ENCODE measurements at regions of chr2 and their contacts with region 1.

Region 1: DNA sequence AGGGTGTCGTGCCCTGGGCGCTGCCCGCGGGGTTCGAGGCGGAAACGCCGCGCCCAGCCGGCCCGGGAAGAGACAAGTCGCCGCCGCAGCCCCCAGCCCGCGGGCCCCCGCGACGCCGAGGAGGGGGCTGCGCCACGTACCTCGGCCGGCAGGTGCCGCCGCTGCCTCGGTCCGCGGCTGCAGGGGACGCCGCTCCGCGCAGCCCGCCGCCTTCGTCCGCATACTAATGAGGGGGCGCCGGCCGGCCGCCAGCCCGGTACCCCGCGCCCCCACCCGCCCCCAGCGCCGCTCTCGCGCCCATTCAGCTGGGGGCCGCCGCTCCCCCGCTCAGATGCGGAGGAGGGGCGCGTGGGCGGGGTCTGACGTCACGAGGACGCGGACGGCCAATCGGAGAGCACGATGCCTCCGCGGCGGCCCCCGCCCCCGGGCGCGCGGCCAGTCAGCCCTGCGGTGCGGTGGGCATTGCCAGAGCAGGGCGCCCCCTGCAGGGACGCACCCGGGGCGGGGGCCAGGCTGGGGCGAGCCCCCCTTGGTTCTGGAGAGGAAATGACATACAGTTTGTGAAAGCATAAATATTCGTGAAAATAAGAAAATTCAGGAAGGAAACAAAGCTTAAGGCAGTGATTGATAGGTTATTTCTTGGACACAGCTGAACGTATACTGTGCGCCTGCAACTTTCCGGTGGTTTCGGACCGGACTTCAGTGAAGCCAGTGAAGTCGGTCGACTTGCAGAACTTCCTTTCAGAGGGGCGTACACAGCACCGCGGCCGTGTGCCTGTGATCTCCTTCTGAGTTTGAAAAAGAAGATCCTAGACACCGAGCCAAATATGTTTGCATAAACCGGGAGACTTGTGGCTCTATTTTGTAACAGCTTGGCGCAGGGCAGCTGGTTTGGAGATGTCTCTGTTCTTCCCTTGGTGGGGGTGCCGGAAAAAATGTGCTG is at the start of gene ST3GAL5:
- DNase-seq: peak; percentile 87 to 95 (median 93)
- H3K4me3 ChIP-seq: peak within 1 kb of the TSS; percentile 61 to 99 (median 88)
- H3K27ac ChIP-seq: peak within 1 kb of the TSS; percentile 83 to 100 (median 99)
- H3K27me3 ChIP-seq: no peaks in the 10 kb centered on the region
- CTCF ChIP-seq: peak; percentile 30 to 97 (median 78)
- total RNA-seq, gene ST3GAL5: 56.0 to 109 (median 86.7) TPM

Region 2: GRCh38 chr2:85741833-85742455 is 147.0 kb before region 1 on chr2:
- intact Hi-C with region 1: loop called in 1 of 2 experiments (anchors 10 kb)
- DNase-seq: peak in 9 of 10 donors; percentile 47 to 85 (median 75)
- H3K4me3 ChIP-seq: peak overlapping the region in 44 of 59 donors; percentile 2 to 56 (median 26)
- H3K27ac ChIP-seq: peak overlapping the region; percentile 78 to 100 (median 98)
- H3K27me3 ChIP-seq: no peaks in the 10 kb centered on the region
- CTCF ChIP-seq: peak in 10 of 56 donors; percentile 9 to 27 (median 16)

Region 3: DNA sequence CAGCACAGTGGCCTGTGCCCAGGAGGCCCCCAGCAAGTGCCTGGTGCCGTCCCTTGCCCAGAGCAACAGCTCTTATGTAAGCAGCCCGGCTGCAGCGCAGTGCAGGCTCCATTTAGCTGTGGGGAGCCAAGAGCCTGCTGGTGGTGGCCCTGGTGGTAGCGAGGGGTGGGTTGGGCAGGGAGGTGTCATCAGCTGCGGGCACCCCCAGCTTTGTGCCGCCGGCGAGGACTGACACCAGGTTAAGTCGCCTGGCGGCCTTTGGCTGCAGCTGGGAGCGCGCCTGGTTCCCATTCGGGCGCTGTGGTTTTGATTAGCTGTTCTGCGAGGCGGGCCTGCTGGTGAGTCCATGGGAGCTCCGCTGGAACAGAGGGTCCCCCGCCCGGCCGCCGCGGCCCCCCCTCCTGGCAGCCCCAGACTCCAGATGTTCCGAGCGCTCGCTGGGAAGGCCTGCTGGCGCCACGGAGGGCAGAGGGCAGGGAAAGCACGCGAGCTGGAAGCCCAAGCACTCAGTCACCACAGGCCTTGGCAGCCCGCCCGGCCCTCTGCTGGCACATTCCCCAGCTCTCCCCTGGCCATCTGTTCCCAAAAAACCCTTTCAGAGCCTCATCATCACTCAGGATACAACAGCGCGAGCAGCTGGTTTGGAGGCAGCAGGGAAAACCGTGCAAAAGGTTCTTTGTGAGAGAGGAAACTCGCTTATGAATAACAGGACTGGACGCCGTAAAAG is 116.8 kb before region 1 on chr2:
- intact Hi-C with region 1: loop called in 1 of 2 experiments (anchors 5 kb)
- DNase-seq: peak; percentile 95 to 99 (median 97)
- H3K4me3 ChIP-seq: peak overlapping the region in 56 of 59 donors; percentile 3 to 59 (median 36)
- H3K27ac ChIP-seq: peak overlapping the region; percentile 46 to 97 (median 91)
- H3K27me3 ChIP-seq: no peaks in the 10 kb centered on the region
- CTCF ChIP-seq: peak in 40 of 56 donors; percentile 4 to 57 (median 38)

Region 4: GRCh38 chr2:85851253-85852151 is 37.5 kb before region 1 on chr2:
- intact Hi-C with region 1: loop called (anchors 1 to 2 kb)
- DNase-seq: peak in 9 of 10 donors; percentile 39 to 72 (median 62)
- H3K4me3 ChIP-seq: peak overlapping the region in 2 of 59 donors; percentile 9 to 21
- H3K27ac ChIP-seq: peak overlapping the region in 58 of 59 donors; percentile 0 to 90 (median 71)
- H3K27me3 ChIP-seq: no peaks in the 10 kb centered on the region
- CTCF ChIP-seq: no peak

Region 5: GRCh38 chr2:85911814-85912692 is 23.1 kb after region 1 on chr2:
- intact Hi-C with region 1: no loop called
- DNase-seq: no peak
- H3K4me3 ChIP-seq: no peak overlapping the region
- H3K27ac ChIP-seq: peak overlapping the region; percentile 14 to 100 (median 77)
- H3K27me3 ChIP-seq: no peaks in the 10 kb centered on the region
- CTCF ChIP-seq: no peak

Region 6: DNA sequence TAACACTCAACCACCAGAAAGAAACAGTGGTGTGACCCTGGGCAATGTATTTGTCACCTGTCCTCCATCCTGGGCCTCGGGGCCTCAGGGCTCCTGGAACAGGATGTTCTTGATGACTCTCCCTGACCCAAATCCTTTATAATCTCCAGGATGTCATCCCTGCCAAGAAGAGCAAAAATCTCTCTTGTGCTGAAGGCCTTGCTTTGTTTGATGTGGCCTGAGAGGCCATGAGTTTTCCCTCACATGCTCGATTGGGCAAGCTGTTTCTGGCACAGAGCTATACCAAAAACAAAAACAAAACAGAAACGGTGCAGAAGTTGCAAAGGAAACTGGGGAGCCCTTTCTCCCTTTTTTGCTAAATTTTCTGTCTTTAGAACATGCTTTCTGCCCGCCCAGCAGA is 35.6 kb after region 1 on chr2:
- intact Hi-C with region 1: loop called (anchors 1 to 2 kb)
- DNase-seq: peak in 2 of 10 donors; percentile 34 to 42
- H3K4me3 ChIP-seq: peak overlapping the region in 1 of 59 donors; percentile 14
- H3K27ac ChIP-seq: peak overlapping the region; percentile 71 to 99 (median 95)
- H3K27me3 ChIP-seq: no peaks in the 10 kb centered on the region
- CTCF ChIP-seq: peak in 2 of 56 donors; percentile 17 to 18

Region 7: DNA sequence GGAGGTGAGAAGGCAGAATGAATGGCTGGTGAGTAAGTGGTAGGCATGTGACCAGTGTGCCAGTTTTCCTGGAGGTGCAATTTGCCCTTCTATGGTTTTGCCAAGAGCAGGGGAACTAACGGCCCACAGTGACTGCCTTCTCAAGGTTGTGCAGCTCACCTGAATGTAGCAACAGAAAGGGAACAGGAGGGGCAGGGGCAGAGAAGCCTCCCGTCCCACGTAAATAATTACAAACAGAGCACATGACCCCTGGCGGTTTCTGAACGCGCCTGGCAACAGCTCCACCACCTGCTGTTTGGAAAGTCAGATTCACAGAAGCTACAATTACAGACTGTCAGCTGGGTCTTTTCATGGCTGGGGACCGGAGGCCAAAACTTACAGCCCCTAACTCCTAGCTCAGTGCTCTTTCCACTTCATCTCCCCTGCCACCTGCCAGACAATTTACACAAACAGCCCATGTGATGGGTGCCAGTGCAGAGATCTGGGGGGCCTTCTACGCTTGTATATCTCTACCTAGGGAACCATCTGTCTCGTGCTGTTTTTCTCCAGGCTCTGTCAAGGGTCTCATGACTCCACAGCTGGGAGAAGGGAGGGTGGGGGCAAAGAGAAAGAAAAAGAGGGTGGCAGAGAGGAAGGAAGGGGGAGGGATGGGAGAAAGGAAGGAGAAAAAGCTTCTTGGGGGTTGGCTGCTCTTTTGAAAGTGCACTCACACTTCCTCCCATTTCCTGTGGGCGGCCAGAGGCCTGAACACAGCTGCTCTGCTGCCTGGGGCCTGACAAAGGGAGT is 147.1 kb after region 1 on chr2:
- intact Hi-C with region 1: loop called (anchors 1 to 2 kb)
- DNase-seq: peak in 9 of 10 donors; percentile 51 to 80 (median 65)
- H3K4me3 ChIP-seq: peak overlapping the region in 9 of 59 donors; percentile 6 to 32 (median 13)
- H3K27ac ChIP-seq: peak overlapping the region; percentile 76 to 99 (median 95)
- H3K27me3 ChIP-seq: no peaks in the 10 kb centered on the region
- CTCF ChIP-seq: peak in 39 of 56 donors; percentile 10 to 64 (median 38)

Region 8: GRCh38 chr2:86079981-86080911 is 191.3 kb after region 1 on chr2:
- intact Hi-C with region 1: loop called (anchors 1 to 2 kb)
- DNase-seq: peak; percentile 65 to 87 (median 80)
- H3K4me3 ChIP-seq: peak overlapping the region in 1 of 59 donors; percentile 8
- H3K27ac ChIP-seq: peak overlapping the region in 29 of 59 donors; percentile 2 to 77 (median 50)
- H3K27me3 ChIP-seq: no peaks in the 10 kb centered on the region
- CTCF ChIP-seq: peak; percentile 26 to 89 (median 82)

Measured in dorsolateral prefrontal cortex (tissue), 120 donors.